Posterior cingulate gyrus (tissue), 11 donors: ENCODE measurements at regions of chr19 and their contacts with region 1.

Region 1: DNA sequence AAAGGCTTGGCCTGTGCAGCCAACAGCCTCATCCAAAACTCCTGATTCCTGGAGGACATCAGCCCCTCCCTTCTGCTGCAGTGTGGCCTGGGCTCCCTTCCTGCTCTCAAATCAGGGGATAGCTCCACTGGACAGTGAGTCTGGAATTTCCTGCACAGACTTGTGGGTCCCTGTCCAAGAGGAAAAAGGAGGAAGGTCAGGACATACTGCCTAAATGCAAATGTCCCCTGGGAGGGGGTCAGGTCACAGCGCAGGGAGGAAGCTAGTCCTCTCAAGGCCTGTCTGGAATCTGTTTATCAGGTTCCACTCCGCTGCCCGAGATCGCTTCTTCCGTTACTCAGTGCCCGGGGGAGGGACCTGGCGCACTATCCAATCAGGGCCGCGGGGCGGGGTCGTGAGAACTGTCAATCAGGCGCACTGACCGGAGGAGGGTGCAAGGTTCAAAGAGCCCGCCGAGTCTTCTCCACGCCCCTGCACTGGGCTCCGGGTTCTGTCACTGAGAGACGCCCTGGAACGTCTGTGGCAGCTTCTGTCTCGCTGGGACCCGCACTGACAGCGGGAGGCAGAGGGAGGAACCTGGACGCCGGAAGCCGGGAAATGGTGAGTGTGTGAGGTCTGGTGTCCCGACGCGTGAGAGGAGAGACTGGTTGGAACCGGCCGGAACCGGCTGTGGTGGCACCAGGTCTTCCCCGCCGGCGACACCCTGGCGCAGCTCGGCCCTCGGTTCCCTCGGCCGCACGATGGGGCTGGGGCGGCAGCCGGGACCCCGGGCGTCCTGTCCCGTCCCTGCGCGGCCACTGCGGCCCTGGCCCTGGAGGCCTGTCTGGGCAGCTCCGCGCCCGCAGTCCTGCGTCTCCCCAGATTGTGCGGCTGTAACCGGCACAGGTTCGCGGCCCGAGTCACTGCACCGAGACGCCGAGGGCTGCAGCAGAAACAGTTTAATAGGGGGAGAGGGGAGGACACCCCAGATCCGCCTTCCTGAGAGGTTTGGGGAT is at the start of gene ZNF441:
- DNase-seq: peak; percentile 95 to 100 (median 98)

Region 2: GRCh38 chr19:11597202-11598102 is 169.4 kb before region 1 on chr19 and contains the start of gene ZNF627:
- intact Hi-C with region 1: loop called (anchors 2 kb)
- DNase-seq: peak; percentile 95 to 100 (median 99)

Region 3: GRCh38 chr19:11738746-11739620 is 27.9 kb before region 1 on chr19 and contains the start of gene ZNF823:
- intact Hi-C with region 1: loop called (anchors 1 kb)
- DNase-seq: peak; percentile 95 to 100 (median 98)

Region 4: DNA sequence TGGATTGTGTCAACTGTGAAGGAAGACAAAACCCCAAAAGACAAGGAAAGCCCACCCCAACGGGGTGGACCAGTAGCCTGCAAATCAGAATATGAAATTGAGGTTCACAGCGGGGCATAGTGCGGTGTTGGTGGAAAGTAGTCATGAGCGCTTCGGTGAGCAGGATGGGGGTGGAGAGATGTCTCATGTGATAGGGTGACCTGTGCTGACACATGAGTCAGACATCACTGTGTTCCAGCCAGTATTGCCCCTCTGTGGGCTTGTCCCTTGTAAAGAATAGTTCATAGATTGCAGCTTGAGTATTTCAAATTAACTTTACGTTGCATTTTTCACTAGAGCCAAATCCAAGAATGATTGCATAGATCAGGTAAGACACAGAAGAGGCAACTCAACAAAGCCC is 128.0 kb after region 1 on chr19:
- intact Hi-C with region 1: no loop called
- DNase-seq: no peak

Region 5: DNA sequence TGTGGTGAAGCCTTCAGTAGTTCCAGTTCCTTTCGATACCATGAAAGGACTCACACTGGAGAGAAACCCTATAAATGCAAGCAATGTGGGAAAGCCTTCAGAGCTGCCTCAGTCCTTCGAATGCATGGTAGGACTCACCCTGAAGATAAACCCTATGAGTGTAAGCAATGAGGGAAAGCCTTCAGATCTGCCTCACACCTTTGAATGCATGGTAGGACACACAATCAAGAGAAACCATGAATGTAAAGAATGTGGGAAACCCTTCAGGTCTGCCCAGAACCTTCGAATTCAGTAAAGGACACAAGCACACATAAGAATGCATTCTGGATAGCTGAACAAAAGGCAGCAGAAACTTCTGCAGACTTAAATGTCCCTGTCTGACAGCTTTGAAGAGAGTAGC is 139.0 kb after region 1 on chr19:
- intact Hi-C with region 1: no loop called
- DNase-seq: no peak